ENCODE measurements at regions of chr22 and their contacts with region 1.

Region 1: GRCh38 chr22:32613773-32614392 is 139.3 kb downstream of the FBXO7 start:
- DNase-seq: no peak
- H3K4me3 ChIP-seq: no peak overlapping the region
- H3K27ac ChIP-seq: no peak overlapping the region
- H3K4me1 ChIP-seq: peaks cover 4% of the 10 kb centered on the region; the same call in 1 of the 2 replicates
- H3K27me3 ChIP-seq: no peaks in the 10 kb centered on the region
- CTCF ChIP-seq: no peak

Region 2: GRCh38 chr22:32665676-32666075 is 51.8 kb after region 1 on chr22:
- CTCF ChIA-PET with region 1: no interaction called
- POLR2A ChIA-PET with region 1: interaction called, 10 read pairs
- intact Hi-C with region 1: no loop called
- DNase-seq: peak in 1 of 2 experiments; percentile 75
- H3K4me3 ChIP-seq: no peak overlapping the region
- H3K27ac ChIP-seq: peak overlapping the region; percentile 54
- H3K4me1 ChIP-seq: peaks cover 16% of the 10 kb centered on the region
- H3K27me3 ChIP-seq: no peaks in the 10 kb centered on the region
- CTCF ChIP-seq: no peak